ENCODE measurements at regions of chr12 and their contacts with region 1.

Region 1: GRCh38 chr12:46473634-46474329 is 101.2 kb upstream of the SLC38A2 start:
- DNase-seq: peak; percentile 77 to 84
- H3K4me3 ChIP-seq: no peak overlapping the region
- H3K4me3 Mint-ChIP-seq: peak overlapping the region; percentile 62
- H3K27ac Mint-ChIP-seq: peak overlapping the region; percentile 84
- H3K4me1 ChIP-seq: peaks cover 48% of the 10 kb centered on the region
- H3K4me1 Mint-ChIP-seq: peaks cover 26% of the 10 kb centered on the region
- H3K27me3 ChIP-seq: no peaks in the 10 kb centered on the region
- H3K27me3 Mint-ChIP-seq: no peaks in the 10 kb centered on the region
- CTCF ChIP-seq: no peak

Region 2: GRCh38 chr12:46430340-46430948 is 43.3 kb before region 1 on chr12:
- CTCF ChIA-PET with region 1: no interaction called
- POLR2A ChIA-PET with region 1: no interaction called
- intact Hi-C with region 1: no loop called
- DNase-seq: peak; percentile 45 to 69
- H3K4me3 ChIP-seq: no peak overlapping the region
- H3K4me3 Mint-ChIP-seq: no peak overlapping the region
- H3K27ac Mint-ChIP-seq: peak overlapping the region; percentile 92
- H3K4me1 ChIP-seq: peaks cover 20% of the 10 kb centered on the region
- H3K4me1 Mint-ChIP-seq: peaks cover 30% of the 10 kb centered on the region
- H3K27me3 ChIP-seq: no peaks in the 10 kb centered on the region
- H3K27me3 Mint-ChIP-seq: no peaks in the 10 kb centered on the region
- CTCF ChIP-seq: no peak

Region 3: GRCh38 chr12:46577063-46577776 is 103.4 kb after region 1 on chr12:
- CTCF ChIA-PET with region 1: no interaction called
- POLR2A ChIA-PET with region 1: interaction called, 13 read pairs
- intact Hi-C with region 1: no loop called
- DNase-seq: no peak
- H3K4me3 ChIP-seq: no peak overlapping the region
- H3K4me3 Mint-ChIP-seq: no peak overlapping the region
- H3K27ac Mint-ChIP-seq: no peak overlapping the region
- H3K4me1 ChIP-seq: no peaks in the 10 kb centered on the region
- H3K4me1 Mint-ChIP-seq: peaks cover 4% of the 10 kb centered on the region
- H3K27me3 ChIP-seq: no peaks in the 10 kb centered on the region
- H3K27me3 Mint-ChIP-seq: no peaks in the 10 kb centered on the region
- CTCF ChIP-seq: no peak

Measured in Caco-2 (cell line).